Heart right ventricle (tissue), 16 donors: ENCODE measurements at regions of chr1 and their contacts with region 1.

Region 1: GRCh38 chr1:174105086-174105485 is 54.2 kb upstream of the RABGAP1L start:
- DNase-seq: no peak
- ATAC-seq: no peak
- H3K4me3 ChIP-seq: no peak overlapping the region
- H3K27ac ChIP-seq: no peak overlapping the region
- H3K4me1 ChIP-seq: no peaks in the 10 kb centered on the region
- H3K27me3 ChIP-seq: peaks cover 0 to 5% (median 0%) of the 10 kb centered on the region in 7 donors
- CTCF ChIP-seq: no peak

Region 2: DNA sequence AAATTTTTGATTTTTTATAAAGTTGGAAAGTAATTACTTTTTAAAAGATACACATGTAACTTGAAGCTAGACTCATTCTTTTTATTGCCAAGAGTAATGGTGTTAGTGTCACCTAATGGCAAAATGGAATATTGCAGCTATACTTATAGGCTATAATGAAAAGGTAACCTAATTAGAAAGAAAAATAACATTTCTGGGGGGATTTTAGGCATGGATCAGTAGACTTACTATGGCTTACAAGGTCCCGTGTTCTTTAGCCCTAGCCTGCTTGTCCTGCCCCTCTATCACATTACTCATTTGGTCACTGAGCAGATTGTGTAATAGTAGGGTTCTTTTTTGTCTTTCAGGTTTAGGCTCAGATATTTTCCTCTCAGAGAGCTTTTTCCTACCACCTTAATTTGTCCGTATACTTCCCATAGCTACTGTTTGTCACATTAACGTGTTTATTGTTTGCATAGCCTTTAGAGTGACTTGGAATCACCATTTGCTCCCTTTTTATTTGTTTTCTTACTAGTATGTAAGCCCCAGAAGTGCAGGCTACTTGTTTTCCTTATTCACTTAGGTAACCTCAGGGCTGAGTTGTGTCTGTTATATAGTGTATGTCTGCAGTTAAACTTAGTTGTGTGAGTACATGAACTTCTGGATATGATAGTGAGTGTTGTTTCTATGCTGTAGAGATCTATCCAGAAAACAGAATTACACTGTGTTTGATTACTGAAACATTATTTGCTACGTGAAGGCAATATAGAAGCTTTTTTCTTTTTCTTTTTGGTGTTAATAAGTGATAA is 112.9 kb after region 1 on chr1:
- intact Hi-C with region 1: loop called in 1 of 10 experiments (anchors 10 kb)
- DNase-seq: no peak
- ATAC-seq: peak in 7 of 8 donors; percentile 16 to 74 (median 52)
- H3K4me3 ChIP-seq: no peak overlapping the region
- H3K27ac ChIP-seq: peak overlapping the region in 1 of 10 donors; percentile 35
- H3K4me1 ChIP-seq: peaks cover 0 to 21% (median 8%) of the 10 kb centered on the region in 9 donors
- H3K27me3 ChIP-seq: no peaks in the 10 kb centered on the region
- CTCF ChIP-seq: peak; percentile 51 to 84 (median 75)